Activated CD4-positive, alpha-beta memory T cell treated with anti-CD3 and anti-CD28 coated beads for 36 hours (primary cell): ENCODE measurements at regions of chr2 and their contacts with region 1.

Region 1: GRCh38 chr2:24577481-24577880 is 86.4 kb downstream of the NCOA1 start:
- DNase-seq: no peak
- H3K4me3 Mint-ChIP-seq: peak overlapping the region; percentile 25
- H3K27ac Mint-ChIP-seq: peak overlapping the region; percentile 81
- H3K4me1 Mint-ChIP-seq: peaks cover 66% of the 10 kb centered on the region
- H3K27me3 Mint-ChIP-seq: no peaks in the 10 kb centered on the region

Region 2: GRCh38 chr2:24461685-24462084 is 115.8 kb before region 1 on chr2:
- CTCF ChIA-PET with region 1: no interaction called
- POLR2A ChIA-PET with region 1: no interaction called
- intact Hi-C with region 1: no loop called
- DNase-seq: no peak
- H3K4me3 Mint-ChIP-seq: no peak overlapping the region
- H3K27ac Mint-ChIP-seq: no peak overlapping the region
- H3K4me1 Mint-ChIP-seq: peaks cover 7% of the 10 kb centered on the region
- H3K27me3 Mint-ChIP-seq: no peaks in the 10 kb centered on the region

Region 3: GRCh38 chr2:24521975-24522639 is 55.4 kb before region 1 on chr2:
- CTCF ChIA-PET with region 1: interaction called, 4 read pairs
- POLR2A ChIA-PET with region 1: interaction called, 9 read pairs
- intact Hi-C with region 1: loop called (anchors 1 kb)
- DNase-seq: no peak
- H3K4me3 Mint-ChIP-seq: no peak overlapping the region
- H3K27ac Mint-ChIP-seq: peak overlapping the region; percentile 66
- H3K4me1 Mint-ChIP-seq: peaks cover 46% of the 10 kb centered on the region
- H3K27me3 Mint-ChIP-seq: no peaks in the 10 kb centered on the region

Region 4: GRCh38 chr2:24702800-24703199 is 125.3 kb after region 1 on chr2:
- CTCF ChIA-PET with region 1: no interaction called
- POLR2A ChIA-PET with region 1: no interaction called
- intact Hi-C with region 1: loop called (anchors 2 kb)
- DNase-seq: no peak
- H3K4me3 Mint-ChIP-seq: no peak overlapping the region
- H3K27ac Mint-ChIP-seq: peak overlapping the region; percentile 81
- H3K4me1 Mint-ChIP-seq: peaks cover 18% of the 10 kb centered on the region
- H3K27me3 Mint-ChIP-seq: no peaks in the 10 kb centered on the region

Region 5: GRCh38 chr2:24827321-24828237 is 250.1 kb after region 1 on chr2:
- CTCF ChIA-PET with region 1: no interaction called
- POLR2A ChIA-PET with region 1: interaction called, 3 read pairs
- intact Hi-C with region 1: loop called (anchors 10 kb)
- DNase-seq: peak; percentile 81
- H3K4me3 Mint-ChIP-seq: no peak overlapping the region
- H3K27ac Mint-ChIP-seq: peak overlapping the region; percentile 3
- H3K4me1 Mint-ChIP-seq: peaks cover 25% of the 10 kb centered on the region
- H3K27me3 Mint-ChIP-seq: no peaks in the 10 kb centered on the region

Region 6: GRCh38 chr2:25063876-25064660 is 486.6 kb after region 1 on chr2:
- CTCF ChIA-PET with region 1: no interaction called
- POLR2A ChIA-PET with region 1: no interaction called
- intact Hi-C with region 1: no loop called
- DNase-seq: no peak
- H3K4me3 Mint-ChIP-seq: no peak overlapping the region
- H3K27ac Mint-ChIP-seq: no peak overlapping the region
- H3K4me1 Mint-ChIP-seq: peaks cover 7% of the 10 kb centered on the region
- H3K27me3 Mint-ChIP-seq: no peaks in the 10 kb centered on the region